ENCODE measurements at regions of chr9 and their contacts with region 1.

Region 1: GRCh38 chr9:136728080-136728547 is 14.6 kb downstream of the LCN10 start:
- DNase-seq: peak; percentile 84 to 97 (median 94)
- ATAC-seq: peak; percentile 73
- H3K4me3 ChIP-seq: peak overlapping the region; percentile 94
- H3K4me3 Mint-ChIP-seq: peak overlapping the region; percentile 74
- H3K27ac ChIP-seq: peak overlapping the region in 1 of 2 donors; percentile 65
- H3K27ac Mint-ChIP-seq: peak overlapping the region; percentile 92
- H3K4me1 ChIP-seq: peaks cover 40% of the 10 kb centered on the region
- H3K4me1 Mint-ChIP-seq: peaks cover 24% of the 10 kb centered on the region
- H3K27me3 ChIP-seq: no peaks in the 10 kb centered on the region
- H3K27me3 Mint-ChIP-seq: peaks cover 7% of the 10 kb centered on the region
- CTCF ChIP-seq: peak; percentile 80

Region 2: DNA sequence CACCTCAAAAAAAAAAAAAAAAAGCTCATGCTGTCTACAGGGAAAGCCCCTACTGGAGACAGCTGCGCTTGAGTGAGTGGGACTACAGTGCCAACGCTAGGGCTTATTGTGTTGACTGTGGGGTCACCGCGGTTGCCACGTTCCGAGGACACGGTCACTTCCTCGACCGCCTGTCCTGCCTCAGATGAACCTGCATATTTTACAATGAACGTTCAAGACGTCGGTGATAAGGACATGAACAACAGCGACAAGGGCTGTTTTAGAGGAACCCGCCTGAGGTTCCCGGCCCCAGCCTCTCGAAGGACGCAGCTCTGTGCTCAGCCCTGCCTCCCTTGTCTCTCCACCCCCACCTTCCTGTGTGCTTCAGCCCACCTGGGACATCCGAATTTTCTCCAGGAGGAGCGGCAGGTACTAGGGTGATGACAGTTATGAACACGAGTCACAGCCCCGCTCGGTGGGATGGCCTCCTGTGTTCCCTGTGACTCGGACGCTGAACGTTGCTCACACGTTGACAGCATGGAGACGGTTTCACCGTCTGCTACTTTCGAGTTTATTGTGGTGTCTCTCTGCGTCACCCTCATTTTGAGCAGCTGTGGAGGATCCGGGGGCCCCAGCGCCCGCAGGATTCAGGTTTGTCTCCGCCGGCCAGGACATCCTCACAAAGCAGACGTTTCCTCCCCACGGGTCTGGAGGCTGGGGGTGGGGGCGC is 27.0 kb before region 1 on chr9:
- CTCF ChIA-PET with region 1: interaction called, 13 read pairs
- POLR2A ChIA-PET with region 1: interaction called, 3 read pairs
- intact Hi-C with region 1: loop called in 1 of 2 experiments (anchors 2 kb)
- DNase-seq: peak in 11 of 14 experiments; percentile 14 to 78 (median 44)
- ATAC-seq: peak; percentile 85
- H3K4me3 ChIP-seq: peak overlapping the region; percentile 40
- H3K4me3 Mint-ChIP-seq: peak overlapping the region; percentile 79
- H3K27ac ChIP-seq: no peak overlapping the region
- H3K27ac Mint-ChIP-seq: peak overlapping the region; percentile 82
- H3K4me1 ChIP-seq: peaks cover 18% of the 10 kb centered on the region
- H3K4me1 Mint-ChIP-seq: peaks cover 11% of the 10 kb centered on the region
- H3K27me3 ChIP-seq: peaks cover 4 to 9% of the 10 kb centered on the region in 2 experiments
- H3K27me3 Mint-ChIP-seq: peaks cover 33% of the 10 kb centered on the region
- CTCF ChIP-seq: no peak

Region 3: GRCh38 chr9:136713548-136714457 is 14.3 kb before region 1 on chr9:
- CTCF ChIA-PET with region 1: interaction called, 7 read pairs
- POLR2A ChIA-PET with region 1: interaction called, 12 read pairs
- intact Hi-C with region 1: no loop called
- DNase-seq: peak in 1 of 14 experiments; percentile 20
- ATAC-seq: no peak
- H3K4me3 ChIP-seq: no peak overlapping the region
- H3K4me3 Mint-ChIP-seq: no peak overlapping the region
- H3K27ac ChIP-seq: no peak overlapping the region
- H3K27ac Mint-ChIP-seq: no peak overlapping the region
- H3K4me1 ChIP-seq: peaks cover 17% of the 10 kb centered on the region
- H3K4me1 Mint-ChIP-seq: no peaks in the 10 kb centered on the region
- H3K27me3 ChIP-seq: peaks cover 37% of the 10 kb centered on the region in 2 experiments
- H3K27me3 Mint-ChIP-seq: peaks cover 42% of the 10 kb centered on the region
- CTCF ChIP-seq: no peak

Region 4: DNA sequence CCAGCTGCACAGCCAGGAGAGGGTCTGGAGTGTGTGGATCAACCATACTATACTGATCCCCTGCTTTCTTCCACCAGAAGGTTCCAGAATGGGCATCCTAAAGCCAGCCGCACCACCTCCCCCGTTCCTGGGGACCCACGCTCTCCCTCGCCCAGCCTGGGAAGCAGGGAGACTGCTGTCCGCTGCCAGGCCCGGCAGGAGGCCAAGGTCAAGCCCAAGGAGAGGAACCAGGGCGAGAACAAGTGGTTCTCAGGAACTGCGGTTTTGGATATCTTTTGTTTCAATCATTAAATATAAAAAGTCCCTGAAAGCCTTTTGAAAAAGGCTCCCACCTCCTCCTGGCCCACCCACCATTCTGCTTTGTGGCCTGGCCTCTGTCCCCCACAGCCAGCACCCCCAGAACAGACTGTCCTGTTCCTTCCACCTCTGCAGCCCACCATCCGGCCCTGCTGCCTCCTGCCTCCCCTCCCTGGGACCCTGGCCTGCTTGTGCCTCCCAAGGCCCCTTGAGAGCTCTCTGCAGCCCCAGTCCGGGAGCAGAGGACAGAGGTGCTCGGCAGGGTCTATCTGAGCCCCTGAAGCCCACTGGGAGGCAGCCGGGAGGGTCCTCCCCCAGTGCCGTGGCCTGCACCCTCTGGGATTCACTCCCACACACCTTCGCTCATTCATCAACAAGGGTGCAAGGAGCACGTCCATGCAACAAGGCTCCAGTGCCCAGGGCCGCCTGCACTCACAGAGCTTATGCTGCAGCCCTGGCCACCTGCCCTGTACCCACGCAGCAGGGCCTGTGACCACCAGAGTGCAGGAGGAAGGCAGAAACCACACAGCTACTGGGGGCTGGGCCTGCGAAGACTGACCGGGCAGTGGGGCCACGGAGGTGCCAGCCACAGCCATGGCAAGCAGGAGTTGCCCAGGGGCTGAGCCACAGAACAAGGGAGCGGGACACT is 20.8 kb after region 1 on chr9:
- CTCF ChIA-PET with region 1: no interaction called
- POLR2A ChIA-PET with region 1: no interaction called
- intact Hi-C with region 1: no loop called
- DNase-seq: peak in 1 of 14 experiments; percentile 6
- ATAC-seq: no peak
- H3K4me3 ChIP-seq: no peak overlapping the region
- H3K4me3 Mint-ChIP-seq: no peak overlapping the region
- H3K27ac ChIP-seq: no peak overlapping the region
- H3K27ac Mint-ChIP-seq: no peak overlapping the region
- H3K4me1 ChIP-seq: no peaks in the 10 kb centered on the region
- H3K4me1 Mint-ChIP-seq: no peaks in the 10 kb centered on the region
- H3K27me3 ChIP-seq: peaks cover 0 to 2% of the 10 kb centered on the region in 2 experiments
- H3K27me3 Mint-ChIP-seq: peaks cover 15% of the 10 kb centered on the region
- CTCF ChIP-seq: no peak